ENCODE measurements at regions of chr2 and their contacts with region 1.

Region 1: GRCh38 chr2:202278944-202279343 is 13.4 kb downstream of the NOP58 start:
- DNase-seq: no peak
- H3K4me3 Mint-ChIP-seq: no peak overlapping the region
- H3K27ac Mint-ChIP-seq: no peak overlapping the region
- H3K4me1 Mint-ChIP-seq: peaks cover 12% of the 10 kb centered on the region
- H3K27me3 Mint-ChIP-seq: no peaks in the 10 kb centered on the region
- CTCF ChIP-seq: no peak

Region 2: GRCh38 chr2:202215179-202215578 is 63.8 kb before region 1 on chr2:
- CTCF ChIA-PET with region 1: no interaction called
- intact Hi-C with region 1: loop called (anchors 5 kb)
- DNase-seq: no peak
- H3K4me3 Mint-ChIP-seq: no peak overlapping the region
- H3K27ac Mint-ChIP-seq: no peak overlapping the region
- H3K4me1 Mint-ChIP-seq: no peaks in the 10 kb centered on the region
- H3K27me3 Mint-ChIP-seq: no peaks in the 10 kb centered on the region
- CTCF ChIP-seq: no peak